Posterior cingulate gyrus (tissue), 11 donors: ENCODE measurements at regions of chr2 and their contacts with region 1.

Region 1: DNA sequence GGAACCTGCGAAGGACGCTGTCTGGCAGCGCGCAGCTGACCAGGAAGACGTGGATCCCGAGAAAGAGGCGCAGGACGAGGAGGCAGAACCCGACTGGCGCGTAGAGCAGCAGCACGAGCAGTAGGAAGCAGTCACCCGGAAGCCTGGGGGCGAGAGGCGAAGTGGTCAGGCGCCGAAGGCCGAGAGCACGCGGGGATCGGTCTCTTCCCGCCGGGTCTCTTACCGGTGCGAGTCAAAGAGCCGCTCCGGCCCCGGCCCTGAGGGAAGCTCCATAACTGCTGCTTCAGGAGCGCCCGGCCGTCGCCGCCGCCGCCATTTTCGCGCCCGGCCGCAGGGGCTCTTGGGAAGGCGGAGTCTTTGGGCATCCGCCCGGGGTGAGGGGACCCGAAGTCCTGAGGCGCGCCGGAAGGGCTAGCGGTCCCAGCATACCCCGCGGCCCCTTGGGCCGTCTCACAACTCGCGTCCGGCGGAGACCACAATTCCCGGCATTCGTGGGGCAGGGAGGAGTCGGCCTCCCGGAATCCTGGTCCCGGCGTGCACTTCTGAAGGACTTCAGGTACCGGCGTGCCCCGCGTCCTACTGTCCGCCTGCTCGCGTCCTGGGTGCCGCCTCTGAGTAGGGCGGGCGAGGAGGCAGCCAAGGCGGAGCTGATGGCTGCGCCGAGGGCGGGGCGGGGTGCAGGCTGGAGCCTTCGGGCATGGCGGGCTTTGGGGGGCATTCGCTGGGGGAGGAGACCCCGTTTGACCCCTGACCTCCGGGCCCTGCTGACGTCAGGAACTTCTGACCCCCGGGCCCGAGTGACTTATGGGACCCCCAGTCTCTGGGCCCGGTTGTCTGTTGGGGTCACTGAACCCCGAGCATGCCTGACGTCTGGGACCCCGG is at the starts of genes AUP1 and HTRA2:
- DNase-seq: peak; percentile 97 to 100 (median 98)

Region 2: GRCh38 chr2:72745679-72746368 is 1783.8 kb before region 1 on chr2:
- intact Hi-C with region 1: no loop called
- DNase-seq: no peak

Region 3: DNA sequence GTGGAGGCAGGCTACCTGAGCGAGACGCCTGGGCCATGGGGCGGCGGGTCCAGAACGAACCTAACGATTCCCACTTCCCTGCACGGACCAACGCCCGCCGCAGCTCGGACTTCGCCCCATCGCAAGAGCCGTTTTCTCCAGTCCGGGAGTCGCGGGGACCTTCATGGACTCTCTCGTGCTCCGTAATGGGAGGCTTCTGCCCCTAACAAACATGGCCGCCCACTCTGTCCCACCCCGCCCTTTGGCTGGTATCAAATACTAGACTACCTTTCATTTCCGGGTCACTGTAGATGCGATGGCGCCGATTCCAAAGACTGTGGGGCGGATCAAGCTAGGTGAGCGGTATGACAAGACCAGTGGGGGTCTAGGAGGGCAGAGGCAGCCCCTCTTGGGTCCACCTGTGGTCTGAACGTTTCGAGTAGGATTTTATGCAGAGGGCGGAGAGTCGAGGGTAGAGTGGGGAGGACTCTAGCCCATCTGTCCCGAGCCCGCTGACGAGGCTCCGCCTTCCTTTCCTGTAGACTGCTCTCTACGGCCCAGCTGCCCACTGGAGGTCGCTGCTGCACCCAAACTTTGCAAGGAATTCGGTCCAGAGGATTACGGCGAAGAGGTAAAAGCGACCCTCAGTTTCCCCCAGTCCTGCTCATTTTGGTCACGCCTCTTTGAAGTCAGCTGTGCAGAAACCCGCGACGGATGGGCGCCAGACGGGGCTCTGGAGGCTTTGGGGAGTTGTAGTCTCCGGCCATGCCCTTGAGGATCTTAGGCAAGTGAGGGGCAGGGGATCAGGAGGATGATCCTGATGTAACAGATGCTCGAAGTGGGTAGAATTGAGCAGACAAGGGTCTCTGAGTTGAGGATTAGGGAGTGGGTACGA is 46.6 kb before region 1 on chr2 and contains the starts of genes CCDC142 and TTC31:
- intact Hi-C with region 1: loop called (anchors 1 kb)
- DNase-seq: peak; percentile 90 to 99 (median 94)

Region 4: GRCh38 chr2:74507145-74507925 is 22.3 kb before region 1 on chr2 and contains the start of gene PCGF1:
- intact Hi-C with region 1: loop called (anchors 1 kb)
- DNase-seq: peak; percentile 91 to 99 (median 98)

Region 5: GRCh38 chr2:74587664-74588277 is 58.2 kb after region 1 on chr2:
- intact Hi-C with region 1: loop called (anchors 2 kb)
- DNase-seq: peak in 6 of 10 donors; percentile 22 to 91 (median 52)

Region 6: GRCh38 chr2:74653985-74654882 is 124.6 kb after region 1 on chr2 and contains the start of gene SEMA4F:
- intact Hi-C with region 1: loop called (anchors 10 kb)
- DNase-seq: peak; percentile 94 to 99 (median 96)

Region 7: DNA sequence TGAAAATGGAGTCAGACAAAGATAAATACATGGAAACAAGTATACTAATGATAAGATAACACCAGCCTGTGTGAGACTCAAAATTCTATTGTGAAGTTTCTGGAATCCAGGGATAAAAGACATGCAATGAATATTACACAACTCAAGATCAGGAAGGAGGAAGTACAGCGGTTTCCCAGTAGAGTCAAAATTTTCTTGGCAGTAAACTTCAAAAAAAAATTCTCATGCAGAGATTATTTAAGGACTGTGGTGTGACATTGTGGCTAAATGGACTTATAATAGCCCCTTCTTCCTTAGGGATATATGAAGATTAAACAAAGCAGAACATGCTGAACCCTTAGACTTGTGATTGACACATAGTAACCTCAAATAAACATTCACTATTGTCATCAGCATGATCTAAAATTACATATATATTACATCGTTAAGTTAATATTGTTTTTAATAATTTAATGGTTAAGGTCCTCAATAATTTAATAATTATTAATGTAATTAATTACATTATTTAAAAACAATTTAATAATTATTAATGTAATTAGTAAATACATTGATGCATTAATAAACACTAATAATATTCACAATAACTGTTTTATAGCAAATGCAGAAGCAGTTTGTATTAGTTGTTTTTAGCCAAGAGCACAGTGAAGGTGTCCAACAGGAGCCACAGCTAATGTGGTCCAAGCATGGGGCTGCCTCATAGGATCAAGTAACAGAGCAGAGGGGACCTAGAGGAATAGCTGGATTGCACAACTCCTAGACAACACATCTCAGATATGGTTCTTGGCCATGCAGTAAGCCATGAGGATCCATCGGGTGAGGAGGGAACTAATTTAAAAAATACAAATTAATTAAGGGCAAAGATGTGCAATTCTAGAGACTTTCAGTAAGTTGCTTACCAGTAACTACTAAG is 506.1 kb after region 1 on chr2:
- intact Hi-C with region 1: no loop called
- DNase-seq: no peak